Heart right ventricle (tissue), 16 donors: ENCODE measurements at regions of chr9 and their contacts with region 1.

Region 1: DNA sequence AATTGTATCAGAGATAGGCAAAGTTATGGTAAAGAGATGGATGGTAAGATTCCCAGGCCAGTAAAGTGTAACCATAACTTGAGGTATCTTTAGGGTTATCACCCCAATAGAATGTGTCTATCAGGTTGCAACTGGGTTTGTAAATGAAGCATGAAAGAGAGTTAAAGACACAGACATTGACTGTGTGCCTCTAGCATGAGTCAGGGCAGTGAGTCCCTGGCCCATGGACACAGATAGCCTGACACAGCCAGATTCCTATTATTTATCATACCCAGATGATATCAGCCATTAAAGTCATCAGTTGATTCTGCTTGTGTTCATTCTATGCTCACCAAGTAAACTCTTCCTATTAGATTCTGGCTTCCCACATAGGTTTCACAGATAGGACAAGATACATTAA is 33.5 kb upstream of the SNAPC3 start:
- DNase-seq: no peak
- ATAC-seq: no peak
- H3K4me3 ChIP-seq: no peak overlapping the region
- H3K27ac ChIP-seq: no peak overlapping the region
- H3K4me1 ChIP-seq: no peaks in the 10 kb centered on the region
- H3K27me3 ChIP-seq: no peaks in the 10 kb centered on the region
- CTCF ChIP-seq: no peak

Region 2: DNA sequence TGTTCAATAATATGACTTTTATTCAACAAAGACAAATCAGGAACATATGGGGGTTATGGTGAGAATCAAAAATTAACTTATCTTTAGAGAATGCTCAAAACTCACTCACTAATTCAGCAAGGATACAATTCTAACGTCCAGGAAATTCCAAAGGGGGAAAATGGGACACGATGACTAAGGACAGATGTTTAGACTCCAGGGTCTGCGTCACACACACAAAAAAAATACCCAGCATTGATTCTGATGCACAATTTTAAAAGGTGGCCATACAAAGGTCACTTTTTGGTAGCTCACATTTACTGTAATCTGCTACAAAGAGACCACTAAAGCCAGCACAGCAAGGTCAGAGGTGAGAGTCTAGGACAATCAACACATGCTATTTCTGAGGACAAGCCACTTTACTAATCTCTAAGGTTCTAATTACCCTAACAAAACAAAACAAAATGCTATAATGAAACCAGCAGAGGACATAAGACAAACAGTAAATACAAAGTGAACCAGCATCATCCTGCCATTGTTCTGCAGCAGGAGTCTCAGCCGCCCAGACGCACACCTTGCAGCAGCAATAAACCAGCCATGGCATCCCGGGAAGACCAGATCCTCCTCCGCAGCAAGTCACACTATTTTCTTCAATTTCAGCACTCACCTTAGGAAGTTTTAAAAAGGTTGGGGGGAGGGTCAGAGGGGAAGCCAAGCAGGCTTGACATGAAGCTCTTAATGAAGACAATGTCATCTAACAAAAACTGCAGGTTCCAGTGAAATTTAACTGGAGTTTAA is 139.9 kb before region 1 on chr9:
- intact Hi-C with region 1: no loop called
- DNase-seq: peak in 1 of 2 donors; percentile 8
- ATAC-seq: peak in 6 of 8 donors; percentile 18 to 78 (median 59)
- H3K4me3 ChIP-seq: no peak overlapping the region
- H3K27ac ChIP-seq: peak overlapping the region in 4 of 10 donors; percentile 23 to 60 (median 48)
- H3K4me1 ChIP-seq: peaks cover 0 to 24% (median 15%) of the 10 kb centered on the region in 9 donors
- H3K27me3 ChIP-seq: no peaks in the 10 kb centered on the region
- CTCF ChIP-seq: no peak

Region 3: GRCh38 chr9:15277400-15278090 is 111.6 kb before region 1 on chr9:
- intact Hi-C with region 1: loop called in 1 of 10 experiments (anchors 10 kb)
- DNase-seq: no peak
- ATAC-seq: peak in 3 of 8 donors; percentile 49 to 57 (median 51)
- H3K4me3 ChIP-seq: no peak overlapping the region
- H3K27ac ChIP-seq: no peak overlapping the region
- H3K4me1 ChIP-seq: no peaks in the 10 kb centered on the region
- H3K27me3 ChIP-seq: no peaks in the 10 kb centered on the region
- CTCF ChIP-seq: peak in 7 of 9 donors; percentile 30 to 56 (median 51)

Region 4: GRCh38 chr9:15333376-15333881 is 55.7 kb before region 1 on chr9:
- intact Hi-C with region 1: loop called in 1 of 10 experiments (anchors 10 kb)
- DNase-seq: no peak
- ATAC-seq: no peak
- H3K4me3 ChIP-seq: no peak overlapping the region
- H3K27ac ChIP-seq: no peak overlapping the region
- H3K4me1 ChIP-seq: no peaks in the 10 kb centered on the region
- H3K27me3 ChIP-seq: peaks cover 0 to 7% (median 0%) of the 10 kb centered on the region in 7 donors
- CTCF ChIP-seq: no peak